ENCODE measurements at regions of chr7 and their contacts with region 1.

Region 1: DNA sequence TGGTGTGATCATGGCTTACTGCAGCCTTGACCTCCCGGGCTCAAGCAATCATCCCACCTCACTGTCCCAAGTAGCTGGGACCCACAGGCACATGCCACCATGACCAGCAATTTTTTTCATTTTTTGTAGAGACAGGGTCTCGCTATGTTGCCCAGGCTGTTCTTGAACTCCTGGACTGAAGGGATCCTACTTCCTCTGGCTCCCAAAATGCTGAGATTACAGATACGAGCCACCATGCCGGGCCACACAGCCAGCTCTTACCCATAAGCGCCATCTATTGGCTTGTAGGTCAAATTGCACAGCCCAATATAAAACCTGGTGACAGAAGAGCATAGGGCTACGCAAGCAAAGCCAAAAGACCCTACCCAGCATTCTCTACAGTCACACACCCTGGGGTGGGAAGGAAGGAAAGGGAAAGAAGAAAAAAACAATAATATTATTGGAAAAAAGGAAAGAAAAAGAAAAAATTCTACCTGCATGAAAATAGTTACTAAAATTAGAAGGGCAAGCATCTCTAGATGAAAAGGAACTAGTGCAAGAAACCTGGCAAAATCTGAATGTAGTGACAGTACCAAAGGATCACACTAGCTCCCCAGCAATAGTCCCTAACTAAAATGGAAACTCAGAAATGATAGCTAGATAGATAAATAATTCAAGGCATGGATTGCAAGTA is 29.4 kb upstream of the AMPH start:
- H3K4me3 ChIP-seq: no peak overlapping the region
- H3K27ac ChIP-seq: no peak overlapping the region
- H3K4me1 ChIP-seq: no peaks in the 10 kb centered on the region; the same call in 1 of the 2 replicates
- CTCF ChIP-seq: no peak; the same call in 1 of the 2 replicates

Region 2: DNA sequence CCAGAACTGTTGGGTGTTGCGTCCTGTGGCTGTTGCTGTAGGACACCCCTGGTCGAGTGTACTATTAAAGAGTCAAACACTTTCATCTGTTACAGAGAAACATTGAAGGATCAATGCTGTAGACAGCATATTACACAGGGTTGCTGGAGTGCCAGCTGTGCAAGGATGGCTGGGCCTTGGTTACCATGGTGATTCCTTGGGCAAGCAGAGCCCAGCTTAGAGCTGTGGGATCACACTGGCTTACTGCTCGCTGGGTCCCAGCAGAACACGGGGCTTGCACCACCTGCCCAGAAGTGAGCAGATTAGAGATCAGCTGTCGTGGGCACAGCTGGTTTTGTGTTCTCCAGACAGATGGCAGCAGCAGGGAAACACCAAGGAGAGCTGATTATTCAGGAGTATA is 901.0 kb before region 1 on chr7:
- CTCF ChIA-PET with region 1: no interaction called
- POLR2A ChIA-PET with region 1: no interaction called
- H3K4me3 ChIP-seq: no peak overlapping the region
- H3K27ac ChIP-seq: no peak overlapping the region
- H3K4me1 ChIP-seq: 0 out of 2 replicates have a peak, but pooled peaks cover 2% of the 10 kb centered on the region
- CTCF ChIP-seq: no peak

Region 3: GRCh38 chr7:38451840-38452239 is 208.7 kb before region 1 on chr7:
- CTCF ChIA-PET with region 1: interaction called, 22 read pairs
- POLR2A ChIA-PET with region 1: no interaction called
- H3K4me3 ChIP-seq: no peak overlapping the region
- H3K27ac ChIP-seq: no peak overlapping the region
- H3K4me1 ChIP-seq: no peaks in the 10 kb centered on the region
- CTCF ChIP-seq: no peak; the same call in 1 of the 2 replicates

Region 4: GRCh38 chr7:39181398-39181797 is 520.8 kb after region 1 on chr7:
- CTCF ChIA-PET with region 1: no interaction called
- POLR2A ChIA-PET with region 1: no interaction called
- H3K4me3 ChIP-seq: no peak overlapping the region
- H3K27ac ChIP-seq: no peak overlapping the region
- H3K4me1 ChIP-seq: no peaks in the 10 kb centered on the region
- CTCF ChIP-seq: no peak

Measured in HEK293 (cell line).